Ascending aorta (tissue), 2 donors: ENCODE measurements at regions of chr2 and their contacts with region 1.

Region 1: GRCh38 chr2:74958274-74959105 is at the start of gene POLE4:
- DNase-seq: peak; percentile 61 to 95
- H3K4me3 ChIP-seq: peak within 1 kb of the TSS; percentile 65 to 79
- H3K27ac ChIP-seq: peak within 1 kb of the TSS; percentile 85 to 91
- H3K4me1 ChIP-seq: peaks cover 3 to 5% of the 10 kb centered on the region in 2 donors
- H3K27me3 ChIP-seq: no peaks in the 10 kb centered on the region
- CTCF ChIP-seq: no peak
- total RNA-seq, gene POLE4: 57.5 TPM

Region 2: GRCh38 chr2:74893332-74893731 is 65.2 kb before region 1 on chr2:
- intact Hi-C with region 1: loop called (anchors 1 kb)
- DNase-seq: peak in 1 of 2 donors; percentile 78
- H3K4me3 ChIP-seq: no peak overlapping the region
- H3K27ac ChIP-seq: peak overlapping the region; percentile 73 to 76
- H3K4me1 ChIP-seq: peaks cover 3 to 9% of the 10 kb centered on the region in 2 donors
- H3K27me3 ChIP-seq: no peaks in the 10 kb centered on the region
- CTCF ChIP-seq: no peak

Region 3: DNA sequence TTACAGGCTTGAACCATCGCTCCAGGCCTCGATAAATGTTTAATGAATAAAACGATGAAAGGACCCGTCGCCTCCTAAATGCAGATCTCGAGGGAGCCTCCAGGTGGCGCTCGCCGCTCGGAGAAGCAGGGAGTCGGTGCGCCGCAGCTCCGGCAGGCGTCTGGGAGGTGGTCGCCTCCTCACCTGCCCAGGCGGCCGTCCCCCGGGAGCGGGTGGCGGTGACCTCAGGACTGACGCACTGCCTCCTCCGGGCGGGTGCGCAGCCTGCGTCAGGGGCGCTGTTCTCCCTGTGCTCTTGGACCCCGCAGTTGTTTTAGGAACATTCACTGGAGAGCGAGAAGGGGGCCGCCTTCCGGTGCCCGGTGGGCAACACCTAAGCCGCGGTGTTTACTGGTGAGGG is 38.7 kb before region 1 on chr2:
- intact Hi-C with region 1: no loop called
- DNase-seq: peak in 1 of 2 donors; percentile 65
- H3K4me3 ChIP-seq: peak overlapping the region in 1 of 2 donors; percentile 54
- H3K27ac ChIP-seq: no peak overlapping the region
- H3K4me1 ChIP-seq: no peaks in the 10 kb centered on the region
- H3K27me3 ChIP-seq: no peaks in the 10 kb centered on the region
- CTCF ChIP-seq: peak; percentile 58 to 88 (median 73)

Region 4: DNA sequence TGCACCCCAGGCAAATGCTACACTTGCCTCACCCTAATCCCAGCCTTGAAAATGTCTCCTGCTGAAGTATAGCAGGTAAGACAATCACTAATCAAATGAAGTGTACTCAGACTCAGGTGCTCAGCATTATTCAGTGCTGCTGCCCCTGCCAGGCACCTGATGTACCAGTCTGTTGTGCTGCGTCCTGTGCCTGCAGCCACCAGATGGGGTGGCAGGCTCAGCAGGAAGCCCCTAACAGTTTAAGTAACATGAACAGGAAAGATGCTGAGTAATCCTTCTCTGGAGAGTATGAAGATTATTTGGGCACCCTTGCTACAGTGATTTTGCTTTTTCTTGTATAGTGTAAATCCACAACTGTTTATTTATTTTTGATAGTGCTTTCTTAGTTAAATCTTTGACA is 171.7 kb after region 1 on chr2:
- intact Hi-C with region 1: no loop called
- DNase-seq: no peak
- H3K4me3 ChIP-seq: no peak overlapping the region
- H3K27ac ChIP-seq: no peak overlapping the region
- H3K4me1 ChIP-seq: no peaks in the 10 kb centered on the region
- H3K27me3 ChIP-seq: no peaks in the 10 kb centered on the region
- CTCF ChIP-seq: peak in 1 of 3 experiments; percentile 46